ENCODE measurements at regions of chr6 and their contacts with region 1.

Region 1: DNA sequence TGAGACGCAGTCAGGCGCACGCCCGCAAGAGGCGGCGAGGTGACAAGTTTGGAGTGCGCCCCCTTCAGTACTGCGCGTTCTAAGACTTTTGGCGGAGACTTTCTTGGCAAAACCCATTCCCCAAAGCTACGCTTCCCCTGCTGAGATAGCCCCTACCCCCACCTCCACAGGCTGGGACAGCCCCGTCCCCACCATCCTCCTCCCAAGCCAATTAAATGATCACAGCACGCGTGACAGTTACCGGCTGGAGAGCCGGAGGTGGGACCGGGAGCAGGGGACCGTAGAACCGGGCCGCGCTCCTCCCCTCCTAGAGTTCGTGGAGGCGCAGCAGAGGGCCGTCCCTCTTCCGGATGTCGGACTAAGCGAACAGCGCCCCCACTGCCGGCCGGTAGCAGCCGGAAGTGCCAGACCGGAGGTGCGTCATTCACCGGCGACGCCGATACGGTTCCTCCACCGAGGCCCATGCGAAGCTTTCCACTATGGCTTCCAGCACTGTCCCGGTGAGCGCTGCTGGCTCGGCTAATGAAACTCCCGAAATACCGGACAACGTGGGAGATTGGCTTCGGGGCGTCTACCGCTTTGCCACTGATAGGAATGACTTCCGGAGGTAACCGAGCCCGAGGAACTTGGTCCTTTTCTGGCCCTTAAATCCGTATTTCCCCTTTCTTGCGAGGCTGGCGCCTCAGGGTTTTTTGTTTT is at the start of gene TOMM6:
- DNase-seq: peak; percentile 93 to 95 (median 94)
- H3K4me3 ChIP-seq: peak within 1 kb of the TSS; percentile 84 to 100
- H3K4me3 Mint-ChIP-seq: peak within 1 kb of the TSS; percentile 95 to 99 (median 98)
- H3K27ac ChIP-seq: peak within 1 kb of the TSS; percentile 90
- H3K27ac Mint-ChIP-seq: peak within 1 kb of the TSS; percentile 92 to 98 (median 98)
- H3K4me1 ChIP-seq: peaks cover 16% of the 10 kb centered on the region
- H3K4me1 Mint-ChIP-seq: peaks cover 7 to 29% (median 12%) of the 10 kb centered on the region in 4 donors
- H3K27me3 ChIP-seq: no peaks in the 10 kb centered on the region
- H3K27me3 Mint-ChIP-seq: peaks cover 0 to 3% of the 10 kb centered on the region in 2 donors
- total RNA-seq, gene TOMM6: 118 to 126 TPM

Region 2: GRCh38 chr6:41735427-41736356 is 51.7 kb before region 1 on chr6 and contains the start of gene TFEB:
- CTCF ChIA-PET with region 1: interaction called, 22 read pairs
- POLR2A ChIA-PET with region 1: interaction called, 43 read pairs
- intact Hi-C with region 1: loop called (anchors 1 kb)
- DNase-seq: peak; percentile 92 to 95 (median 92)
- H3K4me3 ChIP-seq: peak within 1 kb of the TSS in 1 of 2 donors; percentile 64
- H3K4me3 Mint-ChIP-seq: peak within 1 kb of the TSS; percentile 77 to 91 (median 82)
- H3K27ac ChIP-seq: peak within 1 kb of the TSS; percentile 75
- H3K27ac Mint-ChIP-seq: peak within 1 kb of the TSS; percentile 42 to 93 (median 76)
- H3K4me1 ChIP-seq: peaks cover 38% of the 10 kb centered on the region
- H3K4me1 Mint-ChIP-seq: peaks cover 16 to 35% (median 26%) of the 10 kb centered on the region in 4 donors
- H3K27me3 ChIP-seq: no peaks in the 10 kb centered on the region
- H3K27me3 Mint-ChIP-seq: peaks cover 0 to 1% of the 10 kb centered on the region in 2 donors
- total RNA-seq, gene TFEB: 12.2 to 15.7 TPM

Region 3: GRCh38 chr6:41756354-41756753 is 31.0 kb before region 1 on chr6:
- CTCF ChIA-PET with region 1: no interaction called
- POLR2A ChIA-PET with region 1: no interaction called
- intact Hi-C with region 1: no loop called
- DNase-seq: no peak
- H3K4me3 ChIP-seq: no peak overlapping the region
- H3K4me3 Mint-ChIP-seq: no peak overlapping the region
- H3K27ac ChIP-seq: no peak overlapping the region
- H3K27ac Mint-ChIP-seq: no peak overlapping the region
- H3K4me1 ChIP-seq: no peaks in the 10 kb centered on the region
- H3K4me1 Mint-ChIP-seq: no peaks in the 10 kb centered on the region
- H3K27me3 ChIP-seq: no peaks in the 10 kb centered on the region
- H3K27me3 Mint-ChIP-seq: peaks cover 0 to 2% of the 10 kb centered on the region in 2 donors

Region 4: DNA sequence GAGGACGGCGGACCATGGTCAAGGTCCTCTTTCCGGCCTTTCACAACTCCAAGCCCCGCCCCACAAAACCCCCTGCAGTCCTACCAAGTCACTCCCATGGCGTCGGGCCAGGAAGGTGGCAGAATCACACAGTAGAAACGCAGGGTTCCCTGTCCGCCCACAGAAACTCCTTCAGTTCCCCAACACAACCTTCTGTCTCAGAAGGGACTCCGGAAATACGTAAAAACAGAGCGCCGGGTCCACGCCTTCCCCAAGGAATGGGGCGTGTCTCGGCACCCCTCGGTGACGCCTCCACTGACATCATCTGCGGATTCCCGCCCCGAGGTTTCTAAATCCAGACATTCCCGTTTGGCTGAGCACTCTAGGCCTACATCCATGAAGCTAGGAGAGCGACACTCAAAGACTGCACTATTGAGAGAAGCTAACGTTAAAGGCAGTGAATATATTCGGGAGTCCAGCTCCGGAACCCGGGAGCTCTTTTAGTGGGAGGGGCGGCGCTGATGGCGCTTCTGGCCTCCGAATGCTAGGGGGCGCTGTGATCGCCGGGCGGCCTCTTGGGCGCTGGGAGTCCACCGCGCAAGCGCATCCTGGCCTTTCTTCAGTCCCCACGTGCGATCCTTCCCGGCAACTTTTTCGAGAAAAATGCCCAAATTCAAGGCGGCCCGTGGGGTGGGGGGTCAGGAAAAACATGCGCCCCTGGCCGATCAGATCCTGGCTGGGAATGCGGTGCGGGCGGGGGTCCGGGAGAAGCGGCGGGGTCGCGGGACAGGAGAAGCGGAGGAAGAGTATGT is 133.7 kb after region 1 on chr6 and contains the starts of genes BYSL and MED20:
- CTCF ChIA-PET with region 1: interaction called, 59 read pairs
- POLR2A ChIA-PET with region 1: interaction called, 46 read pairs
- intact Hi-C with region 1: loop called (anchors 1 kb)
- DNase-seq: peak; percentile 94 to 96 (median 95)
- H3K4me3 ChIP-seq: peak within 1 kb of the TSS; percentile 75 to 99
- H3K4me3 Mint-ChIP-seq: peak within 1 kb of the TSS; percentile 99 to 100 (median 100)
- H3K27ac ChIP-seq: peak within 1 kb of the TSS; percentile 91
- H3K27ac Mint-ChIP-seq: peak within 1 kb of the TSS; percentile 98 to 100 (median 100)
- H3K4me1 ChIP-seq: peaks cover 47% of the 10 kb centered on the region
- H3K4me1 Mint-ChIP-seq: peaks cover 34 to 57% (median 47%) of the 10 kb centered on the region in 4 donors
- H3K27me3 ChIP-seq: no peaks in the 10 kb centered on the region
- H3K27me3 Mint-ChIP-seq: peaks cover 0 to 2% of the 10 kb centered on the region in 2 donors
- total RNA-seq, gene BYSL: 7.1 to 9.2 TPM
- total RNA-seq, gene MED20: 10.0 to 11.5 TPM

Region 5: GRCh38 chr6:42050266-42051032 is 263.1 kb after region 1 on chr6 and contains the start of gene TAF8:
- CTCF ChIA-PET with region 1: interaction called, 178 read pairs
- POLR2A ChIA-PET with region 1: interaction called, 126 read pairs
- intact Hi-C with region 1: loop called (anchors 1 kb)
- DNase-seq: peak; percentile 87 to 92 (median 88)
- H3K4me3 ChIP-seq: peak within 1 kb of the TSS; percentile 89 to 92
- H3K4me3 Mint-ChIP-seq: peak within 1 kb of the TSS; percentile 91 to 98 (median 96)
- H3K27ac ChIP-seq: peak within 1 kb of the TSS; percentile 77
- H3K27ac Mint-ChIP-seq: peak within 1 kb of the TSS; percentile 95 to 98 (median 97)
- H3K4me1 ChIP-seq: peaks cover 61% of the 10 kb centered on the region
- H3K4me1 Mint-ChIP-seq: peaks cover 18 to 78% (median 42%) of the 10 kb centered on the region in 4 donors
- H3K27me3 ChIP-seq: no peaks in the 10 kb centered on the region
- H3K27me3 Mint-ChIP-seq: no peaks in the 10 kb centered on the region
- total RNA-seq, gene TAF8: 39.1 to 40.9 TPM

Region 6: GRCh38 chr6:42217519-42218367 is 430.4 kb after region 1 on chr6 and contains the start of gene MRPS10:
- CTCF ChIA-PET with region 1: interaction called, 12 read pairs
- POLR2A ChIA-PET with region 1: interaction called, 7 read pairs
- intact Hi-C with region 1: loop called (anchors 1 kb)
- DNase-seq: peak; percentile 88 to 93 (median 90)
- H3K4me3 ChIP-seq: peak within 1 kb of the TSS; percentile 71 to 72
- H3K4me3 Mint-ChIP-seq: peak within 1 kb of the TSS; percentile 95 to 99 (median 98)
- H3K27ac ChIP-seq: peak within 1 kb of the TSS; percentile 81
- H3K27ac Mint-ChIP-seq: peak within 1 kb of the TSS; percentile 90 to 98 (median 97)
- H3K4me1 ChIP-seq: peaks cover 29% of the 10 kb centered on the region
- H3K4me1 Mint-ChIP-seq: peaks cover 12 to 28% (median 20%) of the 10 kb centered on the region in 4 donors
- H3K27me3 ChIP-seq: no peaks in the 10 kb centered on the region
- H3K27me3 Mint-ChIP-seq: no peaks in the 10 kb centered on the region
- total RNA-seq, gene MRPS10: 22.6 to 25.1 TPM

Region 7: DNA sequence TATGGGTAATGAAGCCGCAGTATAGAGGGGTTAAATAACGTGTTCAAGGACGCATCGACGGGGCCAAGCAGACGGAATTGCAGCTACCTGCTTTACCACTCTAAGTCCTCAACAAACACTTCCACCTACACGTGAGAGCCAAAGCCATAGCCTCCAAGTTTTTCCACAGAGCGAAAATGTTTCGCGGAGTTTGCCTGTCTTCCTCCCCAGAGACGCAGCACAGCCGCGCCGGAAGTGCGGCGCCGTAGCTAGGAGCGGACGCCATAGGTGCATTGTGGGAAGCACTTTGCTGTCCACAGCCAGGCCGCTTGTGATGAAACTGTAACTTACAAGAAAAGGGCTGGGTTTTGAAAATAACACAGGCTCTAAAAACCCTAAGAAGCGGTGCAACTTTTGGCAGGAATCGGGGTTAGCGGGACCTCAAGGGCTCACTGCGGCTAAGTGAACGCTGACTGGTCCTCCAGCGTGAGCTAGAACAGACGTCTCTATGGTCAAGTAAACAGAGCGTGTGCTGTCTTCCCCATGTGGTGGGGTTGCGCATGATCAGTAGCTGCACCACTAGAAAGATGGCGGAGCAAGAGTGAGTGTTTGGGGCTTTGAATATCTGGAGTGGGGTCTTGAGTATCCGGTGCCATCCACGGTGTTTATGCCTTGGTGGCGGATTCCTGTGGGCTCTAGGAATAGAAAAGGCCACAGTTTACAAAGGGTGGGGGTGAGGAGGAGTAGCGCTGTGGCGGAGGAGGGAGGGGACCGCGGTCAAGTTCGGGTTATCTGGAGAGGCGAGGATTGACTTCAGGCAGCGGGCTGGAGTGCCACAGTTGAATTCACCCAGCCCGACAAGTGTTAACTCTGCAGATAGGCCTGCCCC is 1092.2 kb after region 1 on chr6 and contains the start of gene RPL7L1:
- CTCF ChIA-PET with region 1: no interaction called
- POLR2A ChIA-PET with region 1: interaction called, 10 read pairs
- intact Hi-C with region 1: no loop called
- DNase-seq: peak; percentile 88 to 93 (median 91)
- H3K4me3 ChIP-seq: peak within 1 kb of the TSS; percentile 77 to 84
- H3K4me3 Mint-ChIP-seq: peak within 1 kb of the TSS; percentile 94 to 99 (median 96)
- H3K27ac ChIP-seq: peak within 1 kb of the TSS; percentile 93
- H3K27ac Mint-ChIP-seq: peak within 1 kb of the TSS; percentile 97 to 100 (median 99)
- H3K4me1 ChIP-seq: peaks cover 23% of the 10 kb centered on the region
- H3K4me1 Mint-ChIP-seq: peaks cover 7 to 39% (median 25%) of the 10 kb centered on the region in 4 donors
- H3K27me3 ChIP-seq: no peaks in the 10 kb centered on the region
- H3K27me3 Mint-ChIP-seq: no peaks in the 10 kb centered on the region
- total RNA-seq, gene RPL7L1: 89.2 to 89.8 TPM